ENCODE measurements at regions of chr9 and their contacts with region 1.

Region 1: GRCh38 chr9:124126571-124127289 is 115.2 kb downstream of the LHX2 start:
- DNase-seq: peak; percentile 51 to 88 (median 64)
- ATAC-seq: peak in 3 of 4 donors; percentile 59 to 77 (median 71)
- H3K4me3 ChIP-seq: no peak overlapping the region
- H3K27ac ChIP-seq: no peak overlapping the region
- H3K4me1 ChIP-seq: peaks cover 0 to 5% (median 0%) of the 10 kb centered on the region in 12 donors
- H3K27me3 ChIP-seq: peaks cover 0 to 23% (median 0%) of the 10 kb centered on the region in 9 donors
- CTCF ChIP-seq: peak; percentile 94 to 99 (median 97)
- POLR2A ChIP-seq: no peak

Region 2: GRCh38 chr9:123262338-123262737 is 864.4 kb before region 1 on chr9:
- intact Hi-C with region 1: no loop called
- DNase-seq: no peak
- ATAC-seq: no peak
- H3K4me3 ChIP-seq: no peak overlapping the region
- H3K27ac ChIP-seq: no peak overlapping the region
- H3K4me1 ChIP-seq: peaks cover 0 to 9% (median 0%) of the 10 kb centered on the region in 12 donors
- H3K27me3 ChIP-seq: no peaks in the 10 kb centered on the region
- CTCF ChIP-seq: no peak
- POLR2A ChIP-seq: no peak

Region 3: DNA sequence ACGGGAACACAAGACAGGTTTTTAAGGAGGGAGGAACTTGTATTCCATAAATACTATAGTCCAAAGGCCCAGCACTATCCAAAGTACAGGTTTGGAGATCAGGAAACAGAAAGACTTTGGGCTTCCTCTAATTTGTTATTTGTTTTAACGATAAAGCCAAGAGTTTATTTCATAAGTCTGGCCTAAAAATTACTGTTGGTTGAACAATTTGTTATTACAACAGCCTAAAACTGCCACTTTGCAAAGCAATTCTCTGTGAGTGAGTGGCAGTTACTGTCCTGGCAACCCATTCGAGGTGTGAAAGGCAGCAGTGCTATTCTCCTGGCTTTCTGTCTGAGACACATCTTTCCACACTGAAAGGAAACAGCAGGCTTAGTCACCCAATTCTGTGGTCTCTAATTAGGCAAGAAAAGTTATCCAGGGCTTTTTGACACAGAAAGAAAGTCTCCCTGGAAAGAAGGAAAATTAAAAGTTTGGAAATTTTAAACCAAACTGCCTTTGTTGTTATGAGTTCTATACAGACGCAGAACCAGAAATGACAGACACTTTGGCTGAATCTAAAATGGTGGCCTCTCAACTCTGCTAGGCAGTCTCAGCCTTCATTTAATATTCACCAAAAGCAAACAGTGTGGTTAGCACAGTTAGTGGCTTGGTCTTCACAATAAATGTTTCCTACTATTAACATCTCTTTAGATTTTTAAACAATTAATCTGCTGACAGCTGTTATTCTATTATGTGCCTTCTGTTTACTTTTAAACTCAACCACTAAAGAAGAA is 254.6 kb after region 1 on chr9:
- intact Hi-C with region 1: loop called in 2 of 10 experiments (anchors 5 to 10 kb)
- DNase-seq: no peak
- ATAC-seq: no peak
- H3K4me3 ChIP-seq: no peak overlapping the region
- H3K27ac ChIP-seq: peak overlapping the region in 1 of 12 donors; percentile 9
- H3K4me1 ChIP-seq: peaks cover 0 to 45% (median 28%) of the 10 kb centered on the region in 12 donors
- H3K27me3 ChIP-seq: no peaks in the 10 kb centered on the region
- CTCF ChIP-seq: no peak
- POLR2A ChIP-seq: no peak

Region 4: DNA sequence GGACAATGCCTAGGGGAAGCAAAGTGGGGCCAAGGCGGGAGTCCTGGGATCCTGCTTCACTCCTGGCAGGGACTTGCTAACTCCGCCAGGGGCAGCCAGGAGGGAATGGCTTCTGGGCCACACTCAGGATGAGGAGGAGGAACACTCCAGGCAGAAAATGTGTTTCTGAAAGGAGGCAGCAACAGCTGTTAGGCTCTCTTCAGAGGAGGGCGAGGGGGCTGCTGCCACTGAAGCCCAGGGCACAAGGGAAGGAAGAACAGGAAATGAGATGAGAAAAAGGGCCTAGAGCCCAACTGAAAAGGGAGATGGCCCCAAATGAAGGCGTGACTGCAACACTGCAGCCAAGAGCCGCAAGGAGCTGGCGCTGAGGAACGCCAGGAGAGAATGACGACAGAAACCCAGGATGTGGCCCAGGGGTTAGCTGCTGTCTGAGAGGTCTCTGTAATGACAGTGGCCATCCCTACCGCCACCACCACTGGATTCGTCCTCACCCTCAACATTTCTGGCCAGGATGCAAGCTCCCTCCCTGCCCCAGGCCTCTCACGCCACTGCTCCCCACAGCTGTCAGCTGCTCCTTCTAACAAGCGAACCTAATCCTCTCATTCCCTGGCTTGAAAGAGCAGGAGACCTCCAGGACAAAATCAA is 272.7 kb after region 1 on chr9:
- intact Hi-C with region 1: loop called in 6 of 10 experiments (anchors 5 to 10 kb)
- DNase-seq: peak in 2 of 5 donors; percentile 47 to 56
- ATAC-seq: peak; percentile 62 to 80 (median 76)
- H3K4me3 ChIP-seq: no peak overlapping the region
- H3K27ac ChIP-seq: peak overlapping the region in 5 of 12 donors; percentile 11 to 52 (median 30)
- H3K4me1 ChIP-seq: peaks cover 0 to 36% (median 14%) of the 10 kb centered on the region in 12 donors
- H3K27me3 ChIP-seq: no peaks in the 10 kb centered on the region
- CTCF ChIP-seq: no peak
- POLR2A ChIP-seq: no peak

Region 5: DNA sequence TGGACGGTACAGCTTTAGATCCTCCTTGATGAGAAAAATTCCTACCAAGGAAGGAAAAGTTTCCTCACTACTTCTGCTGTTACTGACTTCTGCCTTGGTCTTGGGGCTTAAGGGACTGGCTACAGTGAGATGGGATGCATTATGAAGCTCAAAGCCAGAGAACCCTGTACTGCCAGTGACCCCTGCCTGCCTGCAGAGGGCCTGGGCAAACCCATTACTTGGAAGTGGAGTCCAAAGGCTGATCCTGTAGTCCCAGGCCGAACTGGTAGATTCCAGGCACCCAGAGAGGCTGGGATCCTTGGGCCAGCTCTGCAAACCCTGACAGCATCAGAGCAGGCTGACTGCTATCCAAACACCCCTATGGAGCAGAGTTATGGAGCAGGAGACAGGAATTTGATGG is 406.2 kb after region 1 on chr9:
- intact Hi-C with region 1: loop called (anchors 5 to 10 kb)
- DNase-seq: no peak
- ATAC-seq: no peak
- H3K4me3 ChIP-seq: no peak overlapping the region
- H3K27ac ChIP-seq: no peak overlapping the region
- H3K4me1 ChIP-seq: no peaks in the 10 kb centered on the region
- H3K27me3 ChIP-seq: no peaks in the 10 kb centered on the region
- CTCF ChIP-seq: no peak
- POLR2A ChIP-seq: no peak

Measured in heart left ventricle (tissue), 16 donors.